ENCODE measurements at regions of chr2 and their contacts with region 1.

Region 1: GRCh38 chr2:75619956-75620740 is 26.4 kb upstream of the MRPL19 start:
- DNase-seq: no peak
- H3K4me3 ChIP-seq: no peak overlapping the region
- CTCF ChIP-seq: no peak

Region 2: GRCh38 chr2:75464348-75464946 is 155.7 kb before region 1 on chr2:
- in situ Hi-C with region 1: loop called (anchors 5 kb)
- DNase-seq: peak; percentile 27
- H3K4me3 ChIP-seq: no peak overlapping the region
- CTCF ChIP-seq: peak; percentile 82